Panc1 (cell line): ENCODE measurements at regions of chr22 and their contacts with region 1.

Region 1: GRCh38 chr22:46367707-46368191 is 32.2 kb downstream of the TRMU start:
- DNase-seq: peak; percentile 46
- ATAC-seq: peak; percentile 91
- H3K4me3 ChIP-seq: no peak overlapping the region
- H3K27ac ChIP-seq: no peak overlapping the region
- H3K4me1 ChIP-seq: no peaks in the 10 kb centered on the region
- H3K27me3 ChIP-seq: no peaks in the 10 kb centered on the region
- CTCF ChIP-seq: peak; percentile 92

Region 2: GRCh38 chr22:46542011-46542985 is 174.5 kb after region 1 on chr22:
- CTCF ChIA-PET with region 1: interaction called, 15 read pairs
- POLR2A ChIA-PET with region 1: no interaction called
- in situ Hi-C with region 1: no loop called
- intact Hi-C with region 1: loop called (anchors 2 kb)
- DNase-seq: no peak
- ATAC-seq: peak; percentile 89
- H3K4me3 ChIP-seq: no peak overlapping the region
- H3K27ac ChIP-seq: peak overlapping the region; percentile 26; the same call in 1 of the 2 replicates
- H3K4me1 ChIP-seq: peaks cover 27% of the 10 kb centered on the region
- H3K27me3 ChIP-seq: no peaks in the 10 kb centered on the region
- CTCF ChIP-seq: peak; percentile 93

Region 3: GRCh38 chr22:46923394-46923793 is 555.6 kb after region 1 on chr22:
- CTCF ChIA-PET with region 1: interaction called, 16 read pairs
- POLR2A ChIA-PET with region 1: no interaction called
- in situ Hi-C with region 1: no loop called
- intact Hi-C with region 1: no loop called
- DNase-seq: no peak
- ATAC-seq: no peak
- H3K4me3 ChIP-seq: no peak overlapping the region
- H3K27ac ChIP-seq: no peak overlapping the region
- H3K4me1 ChIP-seq: no peaks in the 10 kb centered on the region
- H3K27me3 ChIP-seq: no peaks in the 10 kb centered on the region
- CTCF ChIP-seq: no peak